Activated T-helper 1 cell treated with anti-CD3 and anti-CD28 coated beads, Interleukin-12 subunit alpha, Interleukin-12 subunit beta, Interleukin-2, Interleukin-4 antibody, amounts not matched to agents 30 ng/mL and 10 ng/mL and 1 ng/mL, durations not matched to agents 14 hours and 24 hours and 36 hours (primary cell): ENCODE measurements at regions of chr11 and their contacts with region 1.

Region 1: DNA sequence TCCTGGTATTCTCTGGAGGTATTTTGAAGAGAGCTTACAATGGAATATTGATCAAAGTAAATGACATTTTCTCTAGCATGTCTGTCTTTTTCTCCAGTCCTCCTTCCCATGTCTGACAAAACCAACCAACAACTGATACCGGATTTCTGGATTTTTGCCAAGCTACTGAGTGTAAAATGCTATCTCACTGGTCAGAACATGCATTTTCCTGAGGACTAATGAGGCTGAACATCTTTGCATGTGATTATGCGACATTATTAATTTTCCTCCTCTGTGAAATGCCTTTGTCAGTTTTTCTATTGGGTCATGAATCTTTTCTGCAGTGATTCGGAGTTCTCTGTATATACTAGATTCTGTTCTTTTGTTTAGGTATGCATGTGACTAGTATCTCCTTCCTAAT is 51.4 kb downstream of the CDON start:
- DNase-seq: no peak
- H3K4me3 Mint-ChIP-seq: no peak overlapping the region
- H3K27ac Mint-ChIP-seq: no peak overlapping the region
- H3K4me1 Mint-ChIP-seq: no peaks in the 10 kb centered on the region
- H3K27me3 Mint-ChIP-seq: no peaks in the 10 kb centered on the region

Region 2: GRCh38 chr11:126165757-126166156 is 154.5 kb after region 1 on chr11:
- intact Hi-C with region 1: loop called (anchors 5 kb)
- DNase-seq: no peak
- H3K4me3 Mint-ChIP-seq: no peak overlapping the region
- H3K27ac Mint-ChIP-seq: no peak overlapping the region
- H3K4me1 Mint-ChIP-seq: no peaks in the 10 kb centered on the region
- H3K27me3 Mint-ChIP-seq: peaks cover 4% of the 10 kb centered on the region